Transverse colon (tissue), 4 donors: ENCODE measurements at regions of chrX and their contacts with region 1.

Region 1: DNA sequence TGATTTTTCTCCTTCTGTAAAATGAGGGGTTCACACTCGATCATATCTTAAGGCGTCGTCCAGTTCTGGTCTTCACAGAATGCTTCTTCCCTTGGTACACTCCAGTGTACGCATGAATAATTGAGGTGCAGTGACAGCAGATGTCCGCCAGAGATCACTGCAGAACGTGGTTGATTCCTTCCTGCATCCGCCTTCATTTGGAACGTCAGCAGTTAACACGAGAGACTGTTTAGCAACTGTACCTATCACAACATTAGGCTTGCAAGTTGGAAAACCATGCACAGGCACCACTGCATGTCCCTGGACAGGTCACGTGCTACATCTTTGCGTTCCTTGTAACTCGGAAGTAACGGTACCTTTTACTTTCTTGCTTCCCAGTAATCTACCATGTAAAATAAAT is 66.0 kb upstream of the GEMIN8 start:
- DNase-seq: peak; percentile 9
- H3K4me3 ChIP-seq: no peak overlapping the region
- H3K27ac ChIP-seq: no peak overlapping the region
- H3K4me1 ChIP-seq: no peaks in the 10 kb centered on the region
- H3K27me3 ChIP-seq: no peaks in the 10 kb centered on the region
- CTCF ChIP-seq: peak; percentile 29 to 46 (median 44)
- EP300 ChIP-seq: no peak
- POLR2A ChIP-seq: no peak

Region 2: GRCh38 chrX:12894074-12895030 is 1201.3 kb before region 1 on chrX:
- in situ Hi-C with region 1: no loop called
- intact Hi-C with region 1: no loop called
- DNase-seq: peak; percentile 37
- H3K4me3 ChIP-seq: no peak overlapping the region
- H3K27ac ChIP-seq: no peak overlapping the region
- H3K4me1 ChIP-seq: no peaks in the 10 kb centered on the region
- H3K27me3 ChIP-seq: no peaks in the 10 kb centered on the region
- CTCF ChIP-seq: peak; percentile 48 to 62 (median 55)
- EP300 ChIP-seq: no peak
- POLR2A ChIP-seq: no peak

Region 3: DNA sequence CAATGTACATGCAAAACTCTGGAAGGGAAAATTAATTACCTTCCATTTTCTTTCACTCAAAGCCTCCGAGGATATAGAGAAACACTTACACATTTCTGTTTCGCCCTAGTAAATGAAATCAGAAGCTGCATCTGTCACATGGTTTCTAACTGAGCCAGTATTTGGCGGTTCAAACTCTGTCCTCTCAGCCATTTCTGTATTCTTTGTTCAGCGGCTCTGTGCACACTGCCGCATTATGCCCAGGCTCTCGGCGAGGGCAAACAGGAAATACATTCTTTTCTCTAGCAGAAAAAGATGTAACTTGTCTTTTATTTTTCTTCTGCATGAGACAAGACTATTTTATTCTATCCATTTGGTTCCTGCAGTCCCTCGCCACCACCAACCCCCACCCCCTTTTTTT is 207.4 kb before region 1 on chrX:
- in situ Hi-C with region 1: no loop called
- intact Hi-C with region 1: no loop called
- DNase-seq: no peak
- H3K4me3 ChIP-seq: no peak overlapping the region
- H3K27ac ChIP-seq: no peak overlapping the region
- H3K4me1 ChIP-seq: no peaks in the 10 kb centered on the region
- H3K27me3 ChIP-seq: no peaks in the 10 kb centered on the region
- CTCF ChIP-seq: no peak
- EP300 ChIP-seq: no peak
- POLR2A ChIP-seq: no peak

Region 4: DNA sequence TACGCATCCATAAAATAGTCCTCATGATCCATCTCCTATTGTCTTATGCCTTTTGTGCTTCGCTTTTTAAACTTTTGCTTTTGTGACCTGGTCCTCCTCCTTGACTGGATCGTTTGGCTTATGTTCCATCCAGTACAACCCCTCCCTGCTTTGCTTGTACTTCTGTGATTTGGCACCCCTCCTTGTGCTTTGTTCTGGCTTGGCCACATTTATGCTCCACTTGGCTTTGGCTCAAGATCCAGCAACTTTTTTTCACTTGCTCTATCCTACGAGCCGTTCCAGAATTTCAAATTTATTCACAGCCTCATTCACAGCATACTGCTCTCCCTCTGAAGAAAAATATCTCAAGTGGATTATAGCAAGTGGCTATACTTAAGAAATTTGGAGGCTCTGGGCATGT is 405.6 kb after region 1 on chrX:
- in situ Hi-C with region 1: loop called in 1 of 4 experiments (anchors 25 kb)
- intact Hi-C with region 1: no loop called
- DNase-seq: no peak
- H3K4me3 ChIP-seq: no peak overlapping the region
- H3K27ac ChIP-seq: no peak overlapping the region
- H3K4me1 ChIP-seq: peaks cover 0 to 9% (median 4%) of the 10 kb centered on the region in 4 donors
- H3K27me3 ChIP-seq: no peaks in the 10 kb centered on the region
- CTCF ChIP-seq: no peak
- EP300 ChIP-seq: no peak
- POLR2A ChIP-seq: no peak

Region 5: DNA sequence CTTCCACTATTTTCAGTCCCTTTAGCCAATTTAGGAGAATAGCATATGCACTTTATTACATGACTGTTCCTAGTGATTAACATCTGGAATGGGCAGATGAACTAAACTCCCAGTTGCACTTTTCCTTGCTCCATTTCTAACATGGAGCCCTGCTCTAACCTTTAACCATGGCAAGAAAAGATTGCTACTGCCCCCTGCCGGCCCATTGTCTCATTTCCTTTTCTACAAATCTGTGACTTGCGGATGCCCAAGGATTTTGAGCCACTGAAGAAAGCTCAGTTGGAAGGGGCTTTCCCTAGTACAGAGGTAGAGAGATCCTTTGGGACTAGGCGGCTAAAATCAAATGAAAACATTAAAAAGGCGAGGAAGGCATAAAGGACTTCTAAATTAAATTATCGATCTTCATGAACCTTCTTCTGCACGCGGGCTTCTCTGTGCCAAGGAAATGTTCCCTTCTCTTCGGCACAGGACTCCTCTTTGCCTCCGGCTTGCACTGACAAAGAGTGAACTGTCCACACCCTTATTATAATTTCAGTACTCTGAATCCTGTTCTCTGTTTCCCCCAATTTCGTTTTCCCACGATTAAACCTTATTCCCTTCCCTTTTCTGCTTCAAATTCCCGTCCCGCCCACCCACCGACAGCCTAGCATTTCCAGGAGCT is 433.1 kb after region 1 on chrX:
- in situ Hi-C with region 1: loop called in 2 of 4 experiments (anchors 25 kb)
- intact Hi-C with region 1: no loop called
- DNase-seq: peak; percentile 86
- H3K4me3 ChIP-seq: peak overlapping the region in 1 of 4 donors; percentile 26
- H3K27ac ChIP-seq: no peak overlapping the region
- H3K4me1 ChIP-seq: no peaks in the 10 kb centered on the region
- H3K27me3 ChIP-seq: no peaks in the 10 kb centered on the region
- CTCF ChIP-seq: peak; percentile 44 to 60 (median 48)
- EP300 ChIP-seq: no peak
- POLR2A ChIP-seq: no peak